ENCODE measurements at regions of chr3 and their contacts with region 1.

Region 1: GRCh38 chr3:11155341-11156025 is 1.2 kb downstream of the HRH1 start:
- DNase-seq: peak; percentile 70
- ATAC-seq: peak; percentile 90
- H3K4me3 Mint-ChIP-seq: peak overlapping the region; percentile 83
- H3K27ac Mint-ChIP-seq: no peak overlapping the region
- H3K4me1 Mint-ChIP-seq: peaks cover 12% of the 10 kb centered on the region
- H3K27me3 Mint-ChIP-seq: peaks cover 70% of the 10 kb centered on the region
- CTCF ChIP-seq: no peak

Region 2: DNA sequence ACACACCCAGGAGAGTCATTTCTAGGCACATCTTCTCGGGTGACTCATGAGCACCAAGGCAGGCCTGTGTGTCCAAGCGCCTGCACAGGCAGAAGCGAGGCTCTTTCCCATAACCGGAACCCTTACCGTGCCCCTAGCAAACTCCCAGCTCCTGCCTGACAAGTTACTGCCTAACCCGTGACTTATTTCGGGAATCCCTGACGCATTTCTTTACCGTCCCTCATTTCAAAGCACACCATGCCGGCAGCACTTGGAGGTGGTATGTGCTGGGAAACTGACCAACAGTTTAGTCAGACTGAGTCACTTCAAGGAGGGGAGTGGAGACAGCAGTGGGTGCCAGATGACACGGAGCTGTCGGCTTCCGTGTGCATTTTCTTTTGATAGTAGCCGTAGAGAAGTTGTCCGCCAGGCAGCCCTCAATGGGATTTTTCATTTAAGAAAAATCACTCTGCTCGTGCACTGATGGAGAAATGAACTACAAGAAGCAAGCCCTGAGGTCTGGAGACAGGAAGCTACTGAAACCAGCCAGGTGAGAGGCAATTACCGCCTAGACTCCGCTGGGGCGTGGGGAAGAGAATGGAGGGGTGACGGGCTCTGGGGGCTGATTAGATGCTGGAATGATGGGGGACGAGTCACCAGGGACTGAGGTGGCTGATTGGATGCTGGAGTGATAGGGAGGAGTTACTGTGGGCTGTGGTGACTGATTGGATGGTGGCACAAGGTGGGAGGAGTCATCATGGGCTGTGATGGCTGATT is 18.4 kb before region 1 on chr3:
- CTCF ChIA-PET with region 1: no interaction called
- POLR2A ChIA-PET with region 1: no interaction called
- DNase-seq: no peak
- ATAC-seq: peak; percentile 86
- H3K4me3 Mint-ChIP-seq: no peak overlapping the region
- H3K27ac Mint-ChIP-seq: no peak overlapping the region
- H3K4me1 Mint-ChIP-seq: no peaks in the 10 kb centered on the region
- H3K27me3 Mint-ChIP-seq: no peaks in the 10 kb centered on the region
- CTCF ChIP-seq: no peak

Region 3: DNA sequence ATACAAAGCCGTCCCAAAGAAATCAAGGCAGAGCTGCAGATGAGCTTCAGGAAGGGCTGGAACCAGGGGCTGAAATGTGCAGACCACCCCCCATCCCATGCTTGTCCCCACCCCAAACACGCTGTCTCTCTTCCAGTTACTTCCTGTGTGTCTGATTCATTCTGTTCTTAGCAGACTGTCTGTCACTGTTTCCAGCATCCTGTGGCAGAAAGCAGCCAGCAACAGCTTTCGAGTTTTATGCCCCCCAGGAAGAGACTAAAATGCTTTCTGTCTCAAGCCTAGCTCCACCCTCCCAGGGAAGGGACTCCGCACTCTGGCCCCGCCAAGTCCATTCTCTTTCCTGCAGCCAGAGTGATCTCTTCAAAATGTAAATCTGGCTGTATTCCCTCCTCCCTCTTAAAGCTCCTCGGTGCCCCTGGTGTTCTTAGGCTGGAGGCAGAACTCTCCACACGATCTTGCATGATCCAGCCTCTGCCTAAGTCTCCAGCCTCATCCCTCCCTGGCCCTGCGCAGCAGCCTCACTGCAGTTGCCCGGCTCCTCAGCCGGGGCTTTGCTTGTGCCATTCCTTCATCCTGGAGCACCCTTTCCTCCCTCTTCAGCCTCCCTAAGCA is 40.3 kb after region 1 on chr3:
- CTCF ChIA-PET with region 1: interaction called, 12 read pairs
- POLR2A ChIA-PET with region 1: no interaction called
- DNase-seq: no peak
- ATAC-seq: peak; percentile 73
- H3K4me3 Mint-ChIP-seq: no peak overlapping the region
- H3K27ac Mint-ChIP-seq: no peak overlapping the region
- H3K4me1 Mint-ChIP-seq: peaks cover 16% of the 10 kb centered on the region
- H3K27me3 Mint-ChIP-seq: no peaks in the 10 kb centered on the region
- CTCF ChIP-seq: no peak

Region 4: GRCh38 chr3:11204697-11205348 is 49.3 kb after region 1 on chr3:
- CTCF ChIA-PET with region 1: interaction called, 19 read pairs
- POLR2A ChIA-PET with region 1: no interaction called
- DNase-seq: no peak
- ATAC-seq: no peak
- H3K4me3 Mint-ChIP-seq: no peak overlapping the region
- H3K27ac Mint-ChIP-seq: no peak overlapping the region
- H3K4me1 Mint-ChIP-seq: peaks cover 9% of the 10 kb centered on the region
- H3K27me3 Mint-ChIP-seq: no peaks in the 10 kb centered on the region
- CTCF ChIP-seq: no peak

Region 5: GRCh38 chr3:11335056-11335608 is 179.6 kb after region 1 on chr3:
- CTCF ChIA-PET with region 1: interaction called, 17 read pairs
- POLR2A ChIA-PET with region 1: no interaction called
- DNase-seq: no peak
- ATAC-seq: peak; percentile 81
- H3K4me3 Mint-ChIP-seq: no peak overlapping the region
- H3K27ac Mint-ChIP-seq: no peak overlapping the region; the same call in 1 of the 2 replicates
- H3K4me1 Mint-ChIP-seq: no peaks in the 10 kb centered on the region
- H3K27me3 Mint-ChIP-seq: no peaks in the 10 kb centered on the region
- CTCF ChIP-seq: peak; percentile 36